ENCODE measurements at regions of chr7 and their contacts with region 1.

Region 1: DNA sequence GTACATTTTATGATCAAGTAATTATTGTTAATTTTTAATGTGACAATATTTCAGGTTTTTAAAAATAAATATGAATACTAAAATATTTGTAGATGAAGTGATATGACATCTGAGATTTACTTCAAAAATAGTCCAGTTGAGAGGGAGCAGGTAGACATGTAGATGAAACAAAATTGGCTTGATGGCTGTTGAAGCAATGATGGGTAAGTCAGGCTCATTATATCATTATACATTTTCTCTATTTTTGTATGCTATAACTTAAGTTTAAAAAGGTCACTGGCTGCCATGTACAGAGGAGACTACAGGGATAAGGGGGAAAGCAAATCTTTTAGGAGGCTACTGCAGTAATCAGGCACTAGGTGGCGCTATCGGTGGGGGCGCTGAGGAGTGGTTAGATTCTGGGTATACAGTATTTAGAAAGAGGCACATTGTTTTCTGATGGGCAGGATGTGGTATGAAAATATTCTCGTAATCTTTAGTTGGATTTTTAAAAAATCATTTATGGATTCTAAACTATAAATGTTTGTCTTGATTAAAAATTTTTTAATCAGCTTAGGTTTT is 189.8 kb upstream of the IMMP2L start:
- DNase-seq: no peak
- ATAC-seq: peak; percentile 52
- H3K4me3 Mint-ChIP-seq: no peak overlapping the region
- H3K27ac Mint-ChIP-seq: no peak overlapping the region
- H3K4me1 Mint-ChIP-seq: no peaks in the 10 kb centered on the region
- H3K27me3 Mint-ChIP-seq: peaks cover 5% of the 10 kb centered on the region
- CTCF ChIP-seq: peak; percentile 35

Region 2: GRCh38 chr7:112414855-112415490 is 662.9 kb after region 1 on chr7:
- CTCF ChIA-PET with region 1: no interaction called
- POLR2A ChIA-PET with region 1: no interaction called
- intact Hi-C with region 1: loop called (anchors 1 kb)
- DNase-seq: no peak
- ATAC-seq: no peak
- H3K4me3 Mint-ChIP-seq: no peak overlapping the region
- H3K27ac Mint-ChIP-seq: no peak overlapping the region
- H3K4me1 Mint-ChIP-seq: no peaks in the 10 kb centered on the region
- H3K27me3 Mint-ChIP-seq: peaks cover 16% of the 10 kb centered on the region
- CTCF ChIP-seq: no peak

Region 3: DNA sequence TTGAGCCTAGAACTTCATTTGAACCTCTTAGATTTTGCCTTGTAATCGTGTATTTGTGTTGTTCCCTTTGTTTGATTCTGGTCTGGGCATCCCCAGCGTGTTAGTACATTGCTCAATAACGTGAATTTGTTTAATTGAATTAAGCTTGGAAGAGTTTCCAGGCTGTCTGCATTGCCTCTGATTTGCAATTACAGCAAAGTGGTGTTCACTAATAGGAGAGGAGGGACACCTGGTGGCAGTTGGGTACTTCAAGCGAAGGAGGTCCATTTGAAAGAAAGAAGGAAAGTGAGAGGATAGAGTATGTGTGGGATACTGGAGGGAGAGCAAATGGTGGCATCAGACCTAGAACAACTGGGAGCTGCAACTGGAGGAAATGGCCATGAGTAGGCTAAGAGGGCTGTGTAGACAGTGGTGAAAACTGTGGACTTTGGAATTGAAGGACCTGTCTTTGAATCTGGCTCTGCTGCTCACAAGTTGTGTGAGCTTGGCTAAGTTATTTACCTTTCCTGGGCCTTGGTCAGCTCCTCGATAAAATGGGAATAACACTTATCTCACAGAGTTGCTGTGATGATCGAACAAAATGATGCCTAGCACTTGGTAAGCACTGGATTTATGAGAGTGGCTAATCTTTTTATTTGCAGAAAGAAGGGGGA is 743.8 kb after region 1 on chr7:
- CTCF ChIA-PET with region 1: interaction called, 5 read pairs
- POLR2A ChIA-PET with region 1: no interaction called
- intact Hi-C with region 1: loop called (anchors 1 kb)
- DNase-seq: no peak
- ATAC-seq: no peak
- H3K4me3 Mint-ChIP-seq: no peak overlapping the region
- H3K27ac Mint-ChIP-seq: no peak overlapping the region
- H3K4me1 Mint-ChIP-seq: no peaks in the 10 kb centered on the region
- H3K27me3 Mint-ChIP-seq: no peaks in the 10 kb centered on the region
- CTCF ChIP-seq: no peak